Caco-2 (cell line): ENCODE measurements at regions of chr12 and their contacts with region 1.

Region 1: DNA sequence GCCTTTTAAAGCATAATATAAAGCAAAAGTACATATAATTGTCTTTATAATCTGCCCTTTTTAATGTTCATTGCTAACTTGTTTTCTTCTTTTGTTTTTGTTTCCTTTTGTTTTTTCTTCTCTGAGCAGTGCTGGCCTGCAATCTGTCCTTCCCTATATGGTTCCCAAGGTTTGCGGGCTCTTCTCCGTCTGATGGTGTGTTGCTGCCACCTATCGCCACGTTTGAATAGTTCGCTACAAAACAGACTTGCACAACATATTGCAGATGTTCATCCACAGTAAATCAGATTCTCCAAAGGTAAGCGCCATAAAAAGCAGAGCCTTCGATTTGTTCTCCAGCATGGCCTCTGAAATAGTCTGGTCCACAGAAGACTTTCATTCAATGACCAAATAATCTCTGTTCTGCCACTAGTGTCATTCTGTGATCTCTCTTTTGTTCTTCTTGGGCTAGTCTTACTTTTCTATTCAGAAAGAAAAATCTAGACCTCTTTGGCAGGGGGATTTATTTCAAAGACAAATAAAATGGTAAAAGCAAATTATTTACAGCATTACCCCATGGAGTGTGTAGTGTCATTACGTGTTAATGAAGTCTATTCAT is 33.5 kb downstream of the C12orf50 start:
- DNase-seq: peak; percentile 65 to 66
- H3K4me3 ChIP-seq: no peak overlapping the region
- H3K4me3 Mint-ChIP-seq: no peak overlapping the region
- H3K27ac Mint-ChIP-seq: no peak overlapping the region
- H3K4me1 ChIP-seq: no peaks in the 10 kb centered on the region
- H3K4me1 Mint-ChIP-seq: no peaks in the 10 kb centered on the region
- H3K27me3 ChIP-seq: no peaks in the 10 kb centered on the region
- H3K27me3 Mint-ChIP-seq: peaks cover 6% of the 10 kb centered on the region
- CTCF ChIP-seq: peak; percentile 71 to 77

Region 2: GRCh38 chr12:87274594-87275245 is 721.0 kb before region 1 on chr12:
- CTCF ChIA-PET with region 1: no interaction called
- POLR2A ChIA-PET with region 1: no interaction called
- intact Hi-C with region 1: loop called (anchors 1 kb)
- DNase-seq: peak in 1 of 2 experiments; percentile 27
- H3K4me3 ChIP-seq: no peak overlapping the region
- H3K4me3 Mint-ChIP-seq: no peak overlapping the region
- H3K27ac Mint-ChIP-seq: no peak overlapping the region
- H3K4me1 ChIP-seq: no peaks in the 10 kb centered on the region
- H3K4me1 Mint-ChIP-seq: no peaks in the 10 kb centered on the region
- H3K27me3 ChIP-seq: no peaks in the 10 kb centered on the region
- H3K27me3 Mint-ChIP-seq: no peaks in the 10 kb centered on the region
- CTCF ChIP-seq: peak; percentile 60 to 70

Region 3: GRCh38 chr12:87866578-87867292 is 128.9 kb before region 1 on chr12:
- CTCF ChIA-PET with region 1: no interaction called
- POLR2A ChIA-PET with region 1: no interaction called
- intact Hi-C with region 1: loop called (anchors 1 kb)
- DNase-seq: peak in 1 of 2 experiments; percentile 28
- H3K4me3 ChIP-seq: no peak overlapping the region
- H3K4me3 Mint-ChIP-seq: no peak overlapping the region
- H3K27ac Mint-ChIP-seq: no peak overlapping the region
- H3K4me1 ChIP-seq: no peaks in the 10 kb centered on the region
- H3K4me1 Mint-ChIP-seq: no peaks in the 10 kb centered on the region
- H3K27me3 ChIP-seq: no peaks in the 10 kb centered on the region
- H3K27me3 Mint-ChIP-seq: no peaks in the 10 kb centered on the region
- CTCF ChIP-seq: peak; percentile 42 to 71

Region 4: GRCh38 chr12:87953256-87953860 is 42.3 kb before region 1 on chr12:
- CTCF ChIA-PET with region 1: no interaction called
- POLR2A ChIA-PET with region 1: no interaction called
- intact Hi-C with region 1: loop called (anchors 1 kb)
- DNase-seq: peak in 1 of 2 experiments; percentile 9
- H3K4me3 ChIP-seq: no peak overlapping the region
- H3K4me3 Mint-ChIP-seq: no peak overlapping the region
- H3K27ac Mint-ChIP-seq: no peak overlapping the region
- H3K4me1 ChIP-seq: no peaks in the 10 kb centered on the region
- H3K4me1 Mint-ChIP-seq: no peaks in the 10 kb centered on the region
- H3K27me3 ChIP-seq: no peaks in the 10 kb centered on the region
- H3K27me3 Mint-ChIP-seq: no peaks in the 10 kb centered on the region
- CTCF ChIP-seq: peak; percentile 33 to 61

Region 5: DNA sequence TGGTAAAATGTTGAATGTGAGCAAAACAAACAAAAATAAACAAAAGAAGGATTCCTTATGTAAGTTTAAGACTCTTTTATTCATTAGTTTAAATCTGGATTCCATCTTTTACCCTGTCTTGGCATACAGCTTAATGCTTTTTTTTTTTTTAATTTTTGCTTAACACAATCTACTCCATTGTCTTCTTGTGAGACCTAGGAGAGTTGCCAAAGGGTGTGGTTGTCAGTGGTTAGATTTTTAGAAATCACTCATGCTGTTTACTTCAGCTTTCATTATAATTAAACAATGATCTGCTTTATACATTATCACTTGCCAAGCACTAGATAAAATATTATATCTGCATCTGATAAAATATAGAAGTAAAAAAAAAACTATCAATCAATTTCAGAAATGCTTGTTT is 662.3 kb after region 1 on chr12:
- CTCF ChIA-PET with region 1: no interaction called
- POLR2A ChIA-PET with region 1: no interaction called
- intact Hi-C with region 1: no loop called
- DNase-seq: no peak
- H3K4me3 ChIP-seq: no peak overlapping the region
- H3K4me3 Mint-ChIP-seq: no peak overlapping the region
- H3K27ac Mint-ChIP-seq: no peak overlapping the region
- H3K4me1 ChIP-seq: no peaks in the 10 kb centered on the region
- H3K4me1 Mint-ChIP-seq: no peaks in the 10 kb centered on the region
- H3K27me3 ChIP-seq: no peaks in the 10 kb centered on the region
- H3K27me3 Mint-ChIP-seq: no peaks in the 10 kb centered on the region
- CTCF ChIP-seq: no peak